ENCODE measurements at regions of chr5 and their contacts with region 1.

Region 1: DNA sequence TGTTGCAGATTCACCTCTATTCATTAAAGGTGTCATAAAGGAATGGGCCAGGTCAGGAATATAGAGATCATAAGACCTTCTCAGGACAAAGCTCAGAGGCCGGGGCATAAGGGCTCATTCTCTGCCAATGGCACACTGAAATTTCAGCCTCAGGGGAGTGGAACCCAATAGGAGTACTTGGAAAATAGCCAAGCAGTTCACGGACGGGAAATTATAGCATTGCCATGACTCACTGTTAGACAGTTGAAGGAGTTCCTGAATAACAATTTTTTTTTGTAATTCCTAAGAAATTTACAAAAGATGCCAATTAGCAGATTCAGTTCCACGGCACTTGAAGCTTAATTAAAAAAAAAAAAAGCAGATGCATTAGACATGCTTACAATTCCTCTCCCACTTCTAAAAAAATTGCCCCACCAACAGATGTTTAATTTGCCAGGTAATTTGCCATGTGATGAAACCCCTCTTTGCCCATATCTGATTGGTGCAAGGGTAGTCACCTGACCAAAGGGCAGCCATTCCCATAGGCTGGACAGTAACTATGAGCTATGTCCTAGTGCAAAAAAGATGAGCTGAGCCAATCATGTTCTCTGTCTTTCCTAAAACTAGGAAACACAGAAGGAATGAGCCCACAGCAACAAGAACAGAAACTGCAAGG is 58.6 kb downstream of the PTCD2 start:
- DNase-seq: peak in 1 of 2 donors; percentile 38
- ATAC-seq: peak; percentile 51 to 74 (median 66)
- H3K4me3 ChIP-seq: no peak overlapping the region
- H3K27ac ChIP-seq: peak overlapping the region in 7 of 10 donors; percentile 14 to 52 (median 19)
- H3K4me1 ChIP-seq: peaks cover 7 to 47% (median 18%) of the 10 kb centered on the region in 9 donors
- H3K27me3 ChIP-seq: no peaks in the 10 kb centered on the region
- CTCF ChIP-seq: no peak

Region 2: DNA sequence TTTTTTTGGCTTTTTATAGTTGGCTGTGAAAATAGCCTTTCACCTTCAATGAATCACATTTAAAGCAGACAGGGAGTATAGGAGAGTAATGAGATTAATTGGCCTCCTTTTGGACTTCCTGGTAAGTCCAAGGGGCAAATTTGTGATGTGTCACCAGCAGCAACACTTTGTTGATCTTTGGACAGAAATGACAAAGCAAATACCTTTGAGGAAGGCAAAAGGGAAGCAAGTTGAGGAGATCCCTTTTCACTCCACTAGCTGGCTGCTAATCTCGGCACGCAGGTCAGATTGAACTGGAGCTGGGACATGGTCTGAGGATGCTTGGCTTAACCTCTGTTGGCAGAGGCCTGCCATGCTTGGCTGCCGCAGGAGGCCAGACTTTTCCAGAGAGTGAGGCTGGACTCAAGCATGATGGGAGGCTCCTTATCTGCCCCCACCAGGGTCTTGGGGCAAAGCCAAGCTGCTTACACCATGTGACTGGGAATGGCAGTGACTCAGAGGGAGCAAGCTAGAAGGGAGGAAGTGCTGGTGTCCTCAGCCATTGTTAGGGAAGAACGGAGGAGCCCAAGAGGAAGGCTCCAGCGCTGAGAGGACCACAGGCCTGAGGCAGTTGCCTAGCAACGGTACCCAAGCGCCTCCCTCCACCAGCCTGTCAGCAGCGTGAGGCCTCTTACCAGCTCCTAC is 446.0 kb before region 1 on chr5:
- intact Hi-C with region 1: no loop called
- DNase-seq: peak; percentile 42 to 44
- ATAC-seq: peak; percentile 64 to 95 (median 87)
- H3K4me3 ChIP-seq: no peak overlapping the region
- H3K27ac ChIP-seq: peak overlapping the region in 9 of 10 donors; percentile 2 to 65 (median 53)
- H3K4me1 ChIP-seq: peaks cover 3 to 22% (median 19%) of the 10 kb centered on the region in 9 donors
- H3K27me3 ChIP-seq: no peaks in the 10 kb centered on the region
- CTCF ChIP-seq: peak in 1 of 9 donors; percentile 20

Region 3: GRCh38 chr5:72441861-72442540 is 63.2 kb after region 1 on chr5:
- intact Hi-C with region 1: loop called in 1 of 10 experiments (anchors 10 kb)
- DNase-seq: no peak
- ATAC-seq: peak in 1 of 8 donors; percentile 41
- H3K4me3 ChIP-seq: no peak overlapping the region
- H3K27ac ChIP-seq: peak overlapping the region in 4 of 10 donors; percentile 27 to 70 (median 42)
- H3K4me1 ChIP-seq: peaks cover 0 to 58% (median 27%) of the 10 kb centered on the region in 9 donors
- H3K27me3 ChIP-seq: no peaks in the 10 kb centered on the region
- CTCF ChIP-seq: no peak

Region 4: GRCh38 chr5:72543365-72543764 is 164.6 kb after region 1 on chr5:
- intact Hi-C with region 1: no loop called
- DNase-seq: no peak
- ATAC-seq: no peak
- H3K4me3 ChIP-seq: no peak overlapping the region
- H3K27ac ChIP-seq: no peak overlapping the region
- H3K4me1 ChIP-seq: no peaks in the 10 kb centered on the region
- H3K27me3 ChIP-seq: no peaks in the 10 kb centered on the region
- CTCF ChIP-seq: no peak

Measured in heart right ventricle (tissue), 16 donors.